CD4-positive, alpha-beta T cell (primary cell): ENCODE measurements at regions of chr5 and their contacts with region 1.

Region 1: DNA sequence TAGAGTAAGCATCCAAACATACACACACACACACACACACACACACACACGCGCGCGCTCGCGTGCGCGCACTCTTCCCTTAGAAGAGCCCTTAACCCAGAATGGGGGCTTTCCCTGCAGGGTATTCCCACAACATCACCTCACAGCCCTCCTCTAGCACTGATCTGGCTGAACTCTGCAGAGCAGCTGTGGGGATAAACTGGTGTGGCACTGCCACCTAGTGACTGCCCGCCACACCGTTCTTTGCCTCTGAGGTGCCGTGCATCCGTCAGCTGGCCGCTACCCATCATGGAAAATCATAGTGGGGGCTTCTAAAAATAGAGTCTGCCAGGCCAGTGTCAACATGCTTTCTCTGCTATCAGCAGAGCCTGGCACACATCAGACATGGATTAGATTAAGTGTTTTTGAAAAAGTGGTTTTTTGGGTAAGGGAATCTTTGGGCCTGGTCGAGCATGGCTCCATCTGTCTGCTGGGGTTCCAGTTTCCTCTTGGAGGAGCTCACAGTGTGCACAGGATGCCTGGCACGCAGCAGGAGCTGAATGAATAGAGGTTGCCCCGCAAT is 88.1 kb downstream of the KCNN2 start:
- DNase-seq: peak in 7 of 14 experiments; percentile 6 to 53 (median 17)
- ATAC-seq: peak; percentile 49
- H3K4me3 ChIP-seq: no peak overlapping the region
- H3K4me3 Mint-ChIP-seq: no peak overlapping the region
- H3K27ac ChIP-seq: no peak overlapping the region
- H3K27ac Mint-ChIP-seq: no peak overlapping the region
- H3K4me1 ChIP-seq: no peaks in the 10 kb centered on the region
- H3K4me1 Mint-ChIP-seq: no peaks in the 10 kb centered on the region
- H3K27me3 ChIP-seq: no peaks in the 10 kb centered on the region
- H3K27me3 Mint-ChIP-seq: peaks cover 6% of the 10 kb centered on the region
- CTCF ChIP-seq: peak; percentile 32

Region 2: GRCh38 chr5:112885001-112885400 is 1564.9 kb before region 1 on chr5:
- CTCF ChIA-PET with region 1: no interaction called
- POLR2A ChIA-PET with region 1: no interaction called
- intact Hi-C with region 1: no loop called
- DNase-seq: no peak
- ATAC-seq: no peak
- H3K4me3 ChIP-seq: no peak overlapping the region
- H3K4me3 Mint-ChIP-seq: no peak overlapping the region
- H3K27ac ChIP-seq: no peak overlapping the region
- H3K27ac Mint-ChIP-seq: peak overlapping the region; percentile 40
- H3K4me1 ChIP-seq: peaks cover 15% of the 10 kb centered on the region
- H3K4me1 Mint-ChIP-seq: peaks cover 32% of the 10 kb centered on the region
- H3K27me3 ChIP-seq: no peaks in the 10 kb centered on the region
- H3K27me3 Mint-ChIP-seq: no peaks in the 10 kb centered on the region
- CTCF ChIP-seq: no peak

Region 3: GRCh38 chr5:113612060-113612496 is 837.9 kb before region 1 on chr5:
- CTCF ChIA-PET with region 1: interaction called, 3 read pairs
- POLR2A ChIA-PET with region 1: no interaction called
- intact Hi-C with region 1: loop called in 1 of 2 experiments (anchors 5 kb)
- DNase-seq: peak in 3 of 14 experiments; percentile 43 to 58 (median 58)
- ATAC-seq: peak; percentile 80
- H3K4me3 ChIP-seq: no peak overlapping the region
- H3K4me3 Mint-ChIP-seq: no peak overlapping the region
- H3K27ac ChIP-seq: no peak overlapping the region
- H3K27ac Mint-ChIP-seq: no peak overlapping the region
- H3K4me1 ChIP-seq: peaks cover 3% of the 10 kb centered on the region
- H3K4me1 Mint-ChIP-seq: peaks cover 5% of the 10 kb centered on the region
- H3K27me3 ChIP-seq: peaks cover 0 to 3% of the 10 kb centered on the region in 2 experiments
- H3K27me3 Mint-ChIP-seq: peaks cover 32% of the 10 kb centered on the region
- CTCF ChIP-seq: peak; percentile 72